ENCODE measurements at regions of chr4 and their contacts with region 1.

Region 1: DNA sequence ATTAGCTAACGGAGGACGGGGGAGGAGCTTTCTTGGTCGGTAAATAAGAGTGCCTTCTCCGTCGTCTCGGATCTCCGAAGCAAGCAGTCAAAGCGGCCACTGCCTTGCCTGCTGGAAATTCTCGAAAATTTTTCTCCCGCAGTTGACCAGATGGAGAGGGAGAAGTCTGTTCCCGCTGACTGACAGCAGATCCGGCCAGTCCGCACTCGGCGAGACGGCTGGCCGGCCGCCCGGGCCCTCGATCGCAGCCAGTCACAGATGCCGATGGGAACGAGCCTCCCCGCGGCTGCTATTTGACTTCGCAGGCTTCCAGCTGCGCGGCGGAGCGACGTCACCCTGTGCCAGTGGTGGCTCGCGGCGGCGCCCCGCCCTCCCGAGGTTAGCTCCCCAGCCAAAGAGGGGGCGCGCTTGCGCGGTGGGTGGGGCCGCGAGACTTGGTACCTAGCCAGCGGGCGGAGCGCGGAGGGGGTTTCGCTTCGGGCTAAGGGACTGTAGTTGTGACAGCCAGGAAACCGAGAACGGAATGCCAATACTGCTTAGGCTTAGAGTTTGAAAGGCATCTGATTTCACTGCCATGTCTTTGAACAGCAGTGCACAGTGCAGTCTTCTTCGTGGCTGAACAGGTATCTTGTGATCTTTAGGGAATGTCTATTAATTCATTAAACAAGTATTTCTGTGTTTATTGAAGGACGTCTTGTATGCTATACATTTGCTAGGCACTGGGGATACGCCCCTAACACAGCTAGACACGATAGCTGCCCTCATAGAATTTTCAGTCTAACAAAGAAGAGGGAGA is at the start of gene PPM1K:
- DNase-seq: peak; percentile 99
- H3K4me3 Mint-ChIP-seq: peak within 1 kb of the TSS; percentile 89
- H3K27ac Mint-ChIP-seq: peak within 1 kb of the TSS; percentile 98
- H3K4me1 Mint-ChIP-seq: peaks cover 34% of the 10 kb centered on the region
- H3K27me3 Mint-ChIP-seq: no peaks in the 10 kb centered on the region
- total RNA-seq, gene PPM1K: 54.1 to 55.2 TPM

Region 2: GRCh38 chr4:87422104-87423052 is 862.3 kb before region 1 on chr4 and contains the start of gene NUDT9:
- CTCF ChIA-PET with region 1: no interaction called
- intact Hi-C with region 1: loop called (anchors 2 kb)
- DNase-seq: peak; percentile 91
- H3K4me3 Mint-ChIP-seq: peak within 1 kb of the TSS; percentile 98
- H3K27ac Mint-ChIP-seq: peak within 1 kb of the TSS; percentile 97
- H3K4me1 Mint-ChIP-seq: peaks cover 32% of the 10 kb centered on the region
- H3K27me3 Mint-ChIP-seq: no peaks in the 10 kb centered on the region
- total RNA-seq, gene NUDT9: 12.1 to 13.4 TPM

Region 3: DNA sequence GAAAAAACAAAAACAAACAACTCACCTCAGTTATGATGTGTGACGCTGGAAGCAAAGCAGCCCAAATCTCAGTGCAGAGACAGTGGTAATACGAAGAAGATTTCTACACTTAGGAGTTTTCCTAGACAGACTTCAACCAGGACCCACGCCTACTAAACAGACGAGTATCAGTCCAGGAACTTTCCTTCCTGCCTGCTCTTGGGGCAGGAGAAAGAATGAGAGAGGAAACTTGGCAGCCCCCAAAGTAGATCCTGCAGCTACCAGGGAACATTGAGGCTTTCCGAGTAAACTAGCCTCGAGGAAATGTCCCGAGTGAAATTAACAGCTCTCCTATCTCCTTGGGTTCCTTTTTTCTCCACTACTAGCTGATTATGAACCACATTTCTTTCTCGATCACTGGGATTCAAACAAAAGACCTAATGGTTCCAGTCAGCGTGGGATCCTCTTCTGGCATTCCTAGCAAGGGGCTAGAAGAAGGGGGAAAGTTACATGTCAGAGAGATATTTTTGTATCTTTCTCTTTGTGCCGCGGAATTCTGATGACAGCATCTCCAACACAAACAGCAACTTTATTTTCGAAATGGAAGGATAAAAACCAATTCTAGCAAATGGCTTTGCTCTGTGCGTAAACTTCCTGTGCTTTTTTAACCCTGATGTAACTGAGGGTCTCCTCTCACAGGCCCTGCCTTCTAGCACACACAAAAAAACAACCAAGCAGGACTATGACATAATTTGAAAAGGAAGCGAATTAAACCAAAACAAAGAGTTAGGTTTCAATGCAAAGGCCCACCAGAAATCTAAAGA is 53.5 kb before region 1 on chr4:
- CTCF ChIA-PET with region 1: no interaction called
- intact Hi-C with region 1: loop called (anchors 1 kb)
- DNase-seq: no peak
- H3K4me3 Mint-ChIP-seq: peak overlapping the region; percentile 26
- H3K27ac Mint-ChIP-seq: peak overlapping the region; percentile 28
- H3K4me1 Mint-ChIP-seq: peaks cover 17% of the 10 kb centered on the region
- H3K27me3 Mint-ChIP-seq: no peaks in the 10 kb centered on the region

Region 4: GRCh38 chr4:88378691-88379559 is 94.3 kb after region 1 on chr4 and contains the start of gene HERC6:
- CTCF ChIA-PET with region 1: interaction called, 5 read pairs
- intact Hi-C with region 1: loop called (anchors 1 kb)
- DNase-seq: peak; percentile 84
- H3K4me3 Mint-ChIP-seq: peak within 1 kb of the TSS; percentile 85
- H3K27ac Mint-ChIP-seq: peak within 1 kb of the TSS; percentile 69
- H3K4me1 Mint-ChIP-seq: peaks cover 40% of the 10 kb centered on the region
- H3K27me3 Mint-ChIP-seq: no peaks in the 10 kb centered on the region
- total RNA-seq, gene HERC6: 9.9 to 10.2 TPM

Region 5: DNA sequence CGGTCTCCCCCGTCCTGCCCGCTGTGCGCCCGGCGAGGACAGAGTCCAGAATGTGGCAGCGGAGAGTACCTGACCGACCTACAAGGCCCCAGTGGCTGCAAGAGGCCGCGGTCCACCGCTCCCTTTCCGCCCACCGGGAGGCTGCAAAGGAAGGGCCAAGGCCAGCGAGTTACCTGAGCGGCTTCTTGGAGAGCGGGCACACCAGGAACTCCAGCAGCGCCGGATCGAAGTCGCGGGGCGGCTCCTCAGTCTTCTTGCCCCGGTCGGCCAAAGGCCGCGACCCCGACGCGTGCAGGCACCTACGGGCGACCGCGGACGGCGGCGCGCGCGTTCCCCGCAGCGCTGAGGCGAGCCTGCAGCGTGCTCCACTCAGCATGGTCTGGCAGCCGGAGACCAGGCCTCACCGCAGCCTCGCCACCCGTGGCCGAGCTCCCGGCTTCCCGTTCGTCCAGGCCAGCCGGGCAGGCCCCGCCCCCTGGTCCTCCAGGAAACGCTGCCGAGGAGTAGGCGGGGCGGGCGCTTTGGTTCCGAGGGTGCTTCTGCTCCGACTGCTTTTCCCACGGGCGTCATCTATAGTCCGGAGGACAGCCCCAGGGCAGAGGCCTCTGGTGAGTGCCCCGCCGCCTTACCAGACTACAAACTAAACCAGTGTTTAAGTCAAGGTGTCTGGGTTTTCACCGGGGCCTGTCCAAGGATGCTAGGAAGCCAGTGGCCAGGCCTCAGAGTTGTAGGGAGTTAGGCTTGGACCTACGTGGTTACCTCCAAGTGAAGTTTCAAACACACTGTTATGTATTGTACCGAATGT is 238.9 kb after region 1 on chr4 and contains the start of gene PYURF:
- CTCF ChIA-PET with region 1: no interaction called
- intact Hi-C with region 1: loop called (anchors 1 kb)
- DNase-seq: peak; percentile 85
- H3K4me3 Mint-ChIP-seq: peak within 1 kb of the TSS; percentile 92
- H3K27ac Mint-ChIP-seq: peak within 1 kb of the TSS; percentile 91
- H3K4me1 Mint-ChIP-seq: peaks cover 40% of the 10 kb centered on the region
- H3K27me3 Mint-ChIP-seq: no peaks in the 10 kb centered on the region
- total RNA-seq, gene PYURF: 51.5 to 54.2 TPM

Region 6: GRCh38 chr4:89110986-89111832 is 826.6 kb after region 1 on chr4 and contains the start of gene TIGD2:
- CTCF ChIA-PET with region 1: no interaction called
- intact Hi-C with region 1: loop called (anchors 5 kb)
- DNase-seq: peak; percentile 81
- H3K4me3 Mint-ChIP-seq: peak within 1 kb of the TSS; percentile 76
- H3K27ac Mint-ChIP-seq: no peak within 1 kb of the TSS
- H3K4me1 Mint-ChIP-seq: peaks cover 11% of the 10 kb centered on the region
- H3K27me3 Mint-ChIP-seq: peaks cover 18% of the 10 kb centered on the region
- total RNA-seq, gene TIGD2: 1.1 to 1.3 TPM